Heart left ventricle (tissue), 16 donors: ENCODE measurements at regions of chr1 and their contacts with region 1.

Region 1: DNA sequence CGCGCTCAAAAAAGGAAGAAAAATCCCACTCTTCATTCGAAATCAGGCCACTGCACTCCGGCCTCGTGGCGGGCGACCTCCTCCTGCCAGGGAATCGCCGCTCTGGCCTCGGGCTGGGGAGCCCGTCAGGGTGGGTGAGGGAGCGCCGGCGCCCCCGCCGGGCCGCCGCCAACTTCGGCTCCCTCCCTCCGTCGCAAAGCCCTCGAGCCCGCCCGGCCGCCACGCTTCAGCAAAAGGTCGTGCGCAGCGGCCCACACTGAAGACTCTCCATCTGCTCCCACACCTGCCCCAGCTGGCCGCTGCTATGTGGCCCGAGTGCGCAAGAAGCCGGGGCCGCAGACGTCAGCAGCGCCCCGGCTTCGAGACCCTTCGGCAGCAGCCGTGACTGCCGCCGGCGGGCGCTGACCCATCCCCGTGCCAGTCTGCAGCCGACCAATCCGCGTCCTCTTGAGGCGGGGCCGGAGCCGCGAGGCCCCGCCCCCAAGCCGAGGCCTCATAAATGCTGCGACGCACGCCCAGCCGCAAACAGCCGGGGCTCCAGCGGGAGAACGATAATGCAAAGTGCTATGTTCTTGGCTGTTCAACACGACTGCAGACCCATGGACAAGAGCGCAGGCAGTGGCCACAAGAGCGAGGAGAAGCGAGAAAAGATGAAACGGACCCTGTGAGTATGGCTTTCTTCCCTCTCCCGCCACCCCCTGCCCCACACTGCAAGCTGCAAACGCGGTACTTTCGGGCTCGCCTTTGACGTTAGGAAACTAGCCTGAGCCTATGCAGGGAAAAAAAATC is at the start of gene RGS2:
- DNase-seq: peak; percentile 92 to 96 (median 95)
- ATAC-seq: peak; percentile 95 to 98 (median 98)
- H3K4me3 ChIP-seq: peak within 1 kb of the TSS; percentile 12 to 89 (median 75)
- H3K27ac ChIP-seq: peak within 1 kb of the TSS; percentile 24 to 93 (median 88)
- H3K4me1 ChIP-seq: peaks cover 0 to 49% (median 21%) of the 10 kb centered on the region in 12 donors
- H3K27me3 ChIP-seq: no peaks in the 10 kb centered on the region
- CTCF ChIP-seq: peak in 6 of 12 donors; percentile 7 to 58 (median 36)
- POLR2A ChIP-seq: peak; percentile 94 to 100
- total RNA-seq, gene RGS2: 7.6 to 32.6 (median 9.8) TPM

Region 2: GRCh38 chr1:192489748-192490147 is 319.0 kb before region 1 on chr1:
- intact Hi-C with region 1: loop called in 1 of 10 experiments (anchors 5 kb)
- DNase-seq: peak in 4 of 5 donors; percentile 39 to 68 (median 56)
- ATAC-seq: peak; percentile 87 to 94 (median 90)
- H3K4me3 ChIP-seq: no peak overlapping the region
- H3K27ac ChIP-seq: peak overlapping the region in 9 of 12 donors; percentile 4 to 79 (median 33)
- H3K4me1 ChIP-seq: peaks cover 0 to 16% (median 4%) of the 10 kb centered on the region in 12 donors
- H3K27me3 ChIP-seq: no peaks in the 10 kb centered on the region
- CTCF ChIP-seq: no peak
- POLR2A ChIP-seq: no peak

Region 3: GRCh38 chr1:192626366-192627179 is 182.1 kb before region 1 on chr1:
- intact Hi-C with region 1: loop called in 2 of 10 experiments (anchors 5 to 10 kb)
- DNase-seq: no peak
- ATAC-seq: peak in 3 of 4 donors; percentile 45 to 75 (median 74)
- H3K4me3 ChIP-seq: no peak overlapping the region
- H3K27ac ChIP-seq: no peak overlapping the region
- H3K4me1 ChIP-seq: peaks cover 0 to 35% (median 12%) of the 10 kb centered on the region in 12 donors
- H3K27me3 ChIP-seq: no peaks in the 10 kb centered on the region
- CTCF ChIP-seq: no peak
- POLR2A ChIP-seq: no peak

Region 4: DNA sequence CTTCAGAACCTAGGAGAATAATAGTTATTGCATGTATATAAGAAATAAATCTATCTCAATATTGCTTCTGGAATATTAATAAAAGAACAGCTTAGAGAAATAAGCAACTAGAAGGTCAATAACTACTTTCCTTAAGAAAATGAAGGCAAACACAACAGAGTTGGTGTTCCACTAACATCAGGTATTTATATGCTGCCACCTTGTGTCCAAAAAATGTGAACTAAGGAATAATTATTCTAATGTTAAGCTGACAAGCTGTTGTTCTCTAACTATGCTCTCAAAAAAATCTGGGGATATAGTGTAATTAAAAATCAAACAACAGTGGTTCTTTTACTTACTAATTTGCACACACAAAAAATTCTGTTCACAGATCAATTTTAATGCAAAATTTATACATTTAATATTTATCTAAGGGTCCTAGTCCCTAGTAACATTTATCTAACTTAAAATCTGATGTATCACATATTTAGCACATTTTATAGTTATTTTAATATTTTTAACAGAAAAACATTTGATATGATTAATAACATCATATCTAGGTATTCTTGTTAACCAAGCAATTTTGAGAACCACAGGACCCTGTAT is 210.8 kb after region 1 on chr1:
- intact Hi-C with region 1: loop called (anchors 2 to 10 kb)
- DNase-seq: no peak
- ATAC-seq: peak in 2 of 4 donors; percentile 37 to 71
- H3K4me3 ChIP-seq: no peak overlapping the region
- H3K27ac ChIP-seq: peak overlapping the region in 1 of 12 donors; percentile 19
- H3K4me1 ChIP-seq: peaks cover 0 to 2% (median 0%) of the 10 kb centered on the region in 12 donors
- H3K27me3 ChIP-seq: no peaks in the 10 kb centered on the region
- CTCF ChIP-seq: peak; percentile 43 to 72 (median 56)
- POLR2A ChIP-seq: no peak

Region 5: DNA sequence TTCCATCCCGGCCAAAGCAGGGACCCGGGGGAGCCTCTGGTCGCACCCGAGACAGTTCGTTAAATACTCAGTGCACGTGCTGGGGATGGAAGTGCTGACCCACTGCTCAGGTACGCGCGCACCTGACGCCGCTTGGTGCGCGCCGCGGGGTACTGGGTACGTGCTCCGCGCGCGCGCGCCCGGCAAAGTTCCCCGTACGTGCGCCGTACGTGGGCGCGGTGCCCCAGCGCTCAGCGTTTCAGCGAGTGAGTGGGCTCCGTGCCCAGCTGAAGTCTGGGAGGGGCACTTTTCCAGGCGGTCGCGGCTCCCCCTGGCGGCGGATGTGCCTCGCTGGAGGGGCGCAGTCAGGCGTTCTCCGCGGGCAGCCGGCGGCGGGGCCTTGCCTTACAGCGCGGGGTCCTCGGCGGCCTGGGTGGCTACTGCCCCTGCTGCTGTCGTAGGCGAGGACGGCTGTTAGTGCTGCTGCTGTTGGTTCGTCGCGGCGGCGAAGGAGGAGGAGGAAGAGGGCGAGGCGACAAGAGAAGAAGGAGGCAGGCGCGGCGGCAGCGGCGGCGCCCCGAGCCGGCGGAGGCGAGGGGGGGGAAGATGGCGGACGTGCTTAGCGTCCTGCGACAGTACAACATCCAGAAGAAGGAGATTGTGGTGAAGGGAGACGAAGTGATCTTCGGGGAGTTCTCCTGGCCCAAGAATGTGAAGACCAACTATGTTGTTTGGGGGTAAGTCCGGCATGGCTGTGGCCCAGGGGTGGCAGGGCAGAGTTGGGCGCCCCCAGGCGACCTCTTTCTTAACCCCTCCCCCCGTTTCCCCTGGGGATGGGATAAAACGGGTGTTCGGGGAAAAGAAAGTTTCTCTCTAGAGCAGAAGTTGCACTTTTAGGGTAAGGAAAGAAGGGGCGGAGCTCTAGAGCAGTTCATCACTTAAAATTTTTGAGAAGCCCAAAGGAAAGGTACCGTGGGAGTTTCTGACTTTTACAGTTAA is 313.2 kb after region 1 on chr1 and contains the start of gene CDC73:
- intact Hi-C with region 1: loop called in 4 of 10 experiments (anchors 5 kb)
- DNase-seq: peak; percentile 97 to 99 (median 98)
- ATAC-seq: peak; percentile 98 to 100 (median 98)
- H3K4me3 ChIP-seq: peak within 1 kb of the TSS; percentile 60 to 89 (median 78)
- H3K27ac ChIP-seq: peak within 1 kb of the TSS; percentile 88 to 99 (median 95)
- H3K4me1 ChIP-seq: peaks cover 4 to 41% (median 21%) of the 10 kb centered on the region in 12 donors
- H3K27me3 ChIP-seq: no peaks in the 10 kb centered on the region
- CTCF ChIP-seq: peak; percentile 84 to 99 (median 92)
- POLR2A ChIP-seq: peak in 1 of 2 donors; percentile 85
- total RNA-seq, gene CDC73: 26.6 to 57.3 (median 53.6) TPM